ENCODE measurements at regions of chr13 and their contacts with region 1.

Region 1: DNA sequence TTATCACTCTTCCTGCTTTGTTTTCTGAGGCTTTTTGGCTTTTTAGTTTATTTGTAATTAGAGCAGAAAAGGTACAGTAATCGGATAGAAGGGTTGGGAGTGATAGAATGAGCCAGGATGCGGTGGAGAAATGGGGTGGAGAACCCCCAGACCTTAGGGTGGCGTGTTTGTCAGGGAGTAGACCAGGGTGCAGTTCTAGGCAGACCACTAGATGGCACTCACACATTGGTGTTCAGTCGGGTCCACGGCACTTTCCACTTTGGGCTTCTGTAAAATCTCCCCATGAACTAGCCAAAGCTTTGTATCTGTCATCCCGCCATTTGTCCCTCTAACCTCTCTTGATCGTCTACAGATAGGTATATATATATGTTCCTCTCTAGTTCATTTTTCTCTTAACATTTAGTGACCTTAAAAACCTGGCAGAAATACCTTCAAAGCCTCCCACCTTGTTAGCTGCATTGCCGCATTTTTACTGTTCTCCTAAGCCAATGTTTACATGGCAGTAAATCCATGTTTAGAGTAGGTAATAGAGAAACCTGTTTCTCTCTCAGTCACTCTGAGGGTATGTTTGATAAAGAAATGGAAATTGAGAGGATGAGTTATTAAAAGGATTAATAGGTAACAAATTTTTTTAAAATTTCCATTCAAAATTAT is 154.9 kb downstream of the TM9SF2 start:
- DNase-seq: peak; percentile 95
- H3K4me3 Mint-ChIP-seq: peak overlapping the region; percentile 77
- H3K27ac Mint-ChIP-seq: peak overlapping the region; percentile 50
- H3K4me1 Mint-ChIP-seq: peaks cover 35% of the 10 kb centered on the region
- H3K27me3 Mint-ChIP-seq: peaks cover 15% of the 10 kb centered on the region

Region 2: GRCh38 chr13:99442273-99442895 is 213.8 kb before region 1 on chr13:
- intact Hi-C with region 1: loop called (anchors 2 kb)
- DNase-seq: peak; percentile 89
- H3K4me3 Mint-ChIP-seq: no peak overlapping the region
- H3K27ac Mint-ChIP-seq: no peak overlapping the region
- H3K4me1 Mint-ChIP-seq: peaks cover 8% of the 10 kb centered on the region
- H3K27me3 Mint-ChIP-seq: peaks cover 31% of the 10 kb centered on the region

Region 3: DNA sequence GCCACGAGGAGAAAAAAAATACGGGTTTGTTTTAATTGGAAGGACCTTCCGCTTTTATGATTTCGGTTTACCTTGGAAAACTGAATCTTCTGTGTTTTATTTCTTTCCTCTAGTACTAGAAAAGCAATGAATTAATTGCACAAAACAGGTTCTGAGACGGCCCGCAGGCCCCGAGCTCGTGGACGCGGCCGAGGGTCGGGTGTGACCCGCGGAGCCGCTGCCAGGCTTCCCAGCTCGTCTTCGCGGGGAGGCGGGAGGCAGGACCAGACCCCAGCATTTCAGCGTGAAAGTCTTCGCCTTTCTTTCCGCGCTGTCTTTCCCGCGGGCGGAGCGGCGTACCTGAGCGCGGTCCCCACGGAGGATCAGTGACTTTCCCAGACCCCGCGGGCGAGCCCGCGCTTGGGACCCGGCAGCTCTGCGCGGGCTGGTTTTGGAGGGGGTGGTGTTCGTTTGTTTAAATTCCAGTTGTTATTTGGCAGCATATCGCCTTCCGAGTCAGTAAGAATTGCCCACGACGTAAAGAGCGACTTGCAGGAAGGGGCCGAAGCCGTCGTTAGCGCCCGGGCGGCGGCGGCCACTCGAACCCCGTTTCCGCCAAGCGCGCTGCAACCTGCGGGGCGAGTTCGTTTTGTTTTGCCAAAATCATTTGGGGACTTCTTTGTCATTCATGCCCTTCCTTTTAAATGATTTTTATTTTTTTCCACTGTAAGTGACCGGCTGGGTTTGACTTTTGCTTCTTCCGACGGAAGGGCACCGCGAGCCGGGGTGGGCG is 239.2 kb after region 1 on chr13:
- intact Hi-C with region 1: loop called (anchors 5 kb)
- DNase-seq: peak; percentile 67
- H3K4me3 Mint-ChIP-seq: peak overlapping the region; percentile 68
- H3K27ac Mint-ChIP-seq: no peak overlapping the region
- H3K4me1 Mint-ChIP-seq: peaks cover 8% of the 10 kb centered on the region
- H3K27me3 Mint-ChIP-seq: peaks cover 63% of the 10 kb centered on the region

Region 4: DNA sequence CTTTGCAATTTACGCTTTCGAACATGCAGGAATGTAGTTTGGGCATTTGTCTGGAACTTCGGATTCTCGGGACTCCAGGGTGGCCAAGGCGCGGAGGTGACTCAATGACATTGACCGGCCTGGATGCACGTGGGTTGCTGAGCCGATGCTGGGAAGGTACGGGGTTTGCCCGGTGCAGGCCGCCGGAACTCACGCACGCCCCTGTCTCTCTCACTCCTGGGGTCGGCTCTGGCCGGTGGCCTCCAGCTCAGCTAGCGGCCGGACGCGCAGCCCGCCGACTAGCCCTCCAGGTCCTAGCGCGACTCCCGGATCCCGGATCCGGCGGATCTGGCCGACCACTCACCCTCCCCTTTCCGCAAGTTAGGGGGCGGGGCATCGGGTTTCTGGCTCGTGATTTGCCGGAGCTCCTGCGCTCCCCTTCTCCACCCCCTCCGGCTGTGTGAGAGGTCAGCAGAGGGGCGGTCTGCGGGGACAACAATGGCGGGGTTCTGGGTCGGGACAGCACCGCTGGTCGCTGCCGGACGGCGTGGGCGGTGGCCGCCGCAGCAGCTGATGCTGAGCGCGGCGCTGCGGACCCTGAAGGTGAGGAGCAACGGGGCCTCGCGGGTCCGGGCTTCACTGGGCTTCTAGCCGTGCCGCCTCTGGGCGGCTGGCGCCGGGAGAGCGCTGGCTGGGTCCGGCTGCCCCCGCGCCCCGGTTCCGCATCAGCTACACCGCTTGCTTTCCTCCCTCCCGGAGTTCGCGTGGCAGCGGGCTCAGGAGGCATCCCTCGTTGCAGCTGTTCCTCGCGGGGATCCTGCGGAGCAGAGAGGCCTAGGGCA is 432.6 kb after region 1 on chr13 and contains the start of gene PCCA:
- intact Hi-C with region 1: loop called (anchors 2 kb)
- DNase-seq: peak; percentile 95
- H3K4me3 Mint-ChIP-seq: peak within 1 kb of the TSS; percentile 94
- H3K27ac Mint-ChIP-seq: peak within 1 kb of the TSS; percentile 86
- H3K4me1 Mint-ChIP-seq: peaks cover 18% of the 10 kb centered on the region
- H3K27me3 Mint-ChIP-seq: peaks cover 4% of the 10 kb centered on the region
- total RNA-seq, gene PCCA: 5.8 and 6.4 TPM in 2 replicates

Region 5: GRCh38 chr13:100506600-100507422 is 850.6 kb after region 1 on chr13:
- intact Hi-C with region 1: loop called (anchors 2 kb)
- DNase-seq: no peak
- H3K4me3 Mint-ChIP-seq: peak overlapping the region; percentile 77
- H3K27ac Mint-ChIP-seq: peak overlapping the region; percentile 85
- H3K4me1 Mint-ChIP-seq: peaks cover 20% of the 10 kb centered on the region
- H3K27me3 Mint-ChIP-seq: peaks cover 13% of the 10 kb centered on the region

Region 6: GRCh38 chr13:100588331-100589177 is 932.3 kb after region 1 on chr13 and contains the start of gene GGACT:
- intact Hi-C with region 1: loop called (anchors 2 kb)
- DNase-seq: peak; percentile 95
- H3K4me3 Mint-ChIP-seq: peak within 1 kb of the TSS; percentile 84
- H3K27ac Mint-ChIP-seq: peak within 1 kb of the TSS; percentile 96
- H3K4me1 Mint-ChIP-seq: peaks cover 44% of the 10 kb centered on the region
- H3K27me3 Mint-ChIP-seq: no peaks in the 10 kb centered on the region
- total RNA-seq, gene GGACT: 4.4 and 5.9 TPM in 2 replicates

Region 7: GRCh38 chr13:101626925-101627555 is 1970.8 kb after region 1 on chr13:
- intact Hi-C with region 1: loop called (anchors 5 kb)
- DNase-seq: peak; percentile 75
- H3K4me3 Mint-ChIP-seq: peak overlapping the region; percentile 14
- H3K27ac Mint-ChIP-seq: peak overlapping the region; percentile 25
- H3K4me1 Mint-ChIP-seq: peaks cover 18% of the 10 kb centered on the region
- H3K27me3 Mint-ChIP-seq: peaks cover 21% of the 10 kb centered on the region